HEK293T (cell line): ENCODE measurements at regions of chr15 and their contacts with region 1.

Region 1: GRCh38 chr15:74995241-74995778 is at the start of gene SCAMP5:
- DNase-seq: peak; percentile 100

Region 2: GRCh38 chr15:74978503-74978902 is 16.8 kb before region 1 on chr15:
- CTCF ChIA-PET with region 1: no interaction called
- POLR2A ChIA-PET with region 1: interaction called, 11 read pairs
- DNase-seq: no peak

Region 3: GRCh38 chr15:74983725-74984231 is 11.5 kb before region 1 on chr15:
- CTCF ChIA-PET with region 1: no interaction called
- POLR2A ChIA-PET with region 1: interaction called, 12 read pairs
- DNase-seq: no peak

Region 4: DNA sequence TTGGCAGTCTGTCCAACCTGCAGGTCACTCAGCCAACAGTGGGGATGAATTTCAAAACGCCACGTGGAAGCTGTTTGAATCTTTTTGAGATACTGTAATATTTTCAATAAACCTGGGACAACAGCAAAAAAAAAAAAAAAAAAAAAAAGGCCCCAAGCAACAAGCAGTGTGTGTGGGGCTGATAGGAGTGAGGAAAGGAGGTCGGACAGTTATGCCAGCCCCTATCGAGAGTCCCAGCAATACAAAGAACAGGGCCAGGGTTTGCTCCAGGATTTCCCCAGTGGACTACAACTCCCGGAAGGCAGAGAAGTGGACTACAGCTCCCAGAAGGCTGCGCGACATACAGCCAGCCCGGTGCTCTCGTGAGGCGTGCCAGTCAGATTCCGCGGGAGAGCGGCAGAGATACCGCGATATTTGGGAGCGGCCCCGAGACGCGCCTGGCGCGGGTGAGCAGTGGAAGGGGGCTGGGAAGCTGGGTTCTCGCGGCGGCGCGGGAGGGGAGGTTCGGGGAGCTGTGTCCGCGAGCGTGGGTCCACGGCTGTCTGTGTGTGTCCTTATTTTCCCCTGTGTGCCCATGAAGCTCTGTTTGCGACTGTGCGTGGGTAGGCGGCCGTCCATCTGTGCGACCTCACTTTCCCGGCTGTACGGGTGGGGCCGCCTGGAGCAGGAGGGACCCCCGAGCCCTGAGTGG is 28.0 kb after region 1 on chr15 and contains the start of gene PPCDC:
- CTCF ChIA-PET with region 1: no interaction called
- POLR2A ChIA-PET with region 1: interaction called, 36 read pairs
- DNase-seq: peak; percentile 100